Testis (tissue), 5 donors: ENCODE measurements at regions of chr10 and their contacts with region 1.

Region 1: GRCh38 chr10:60208676-60209269 is 180.9 kb downstream of the ANK3 start:
- DNase-seq: no peak
- H3K4me3 ChIP-seq: no peak overlapping the region
- H3K27ac ChIP-seq: no peak overlapping the region
- H3K4me1 ChIP-seq: no peaks in the 10 kb centered on the region
- H3K27me3 ChIP-seq: no peaks in the 10 kb centered on the region
- CTCF ChIP-seq: peak; percentile 36 to 66 (median 62)
- POLR2A ChIP-seq: no peak

Region 2: DNA sequence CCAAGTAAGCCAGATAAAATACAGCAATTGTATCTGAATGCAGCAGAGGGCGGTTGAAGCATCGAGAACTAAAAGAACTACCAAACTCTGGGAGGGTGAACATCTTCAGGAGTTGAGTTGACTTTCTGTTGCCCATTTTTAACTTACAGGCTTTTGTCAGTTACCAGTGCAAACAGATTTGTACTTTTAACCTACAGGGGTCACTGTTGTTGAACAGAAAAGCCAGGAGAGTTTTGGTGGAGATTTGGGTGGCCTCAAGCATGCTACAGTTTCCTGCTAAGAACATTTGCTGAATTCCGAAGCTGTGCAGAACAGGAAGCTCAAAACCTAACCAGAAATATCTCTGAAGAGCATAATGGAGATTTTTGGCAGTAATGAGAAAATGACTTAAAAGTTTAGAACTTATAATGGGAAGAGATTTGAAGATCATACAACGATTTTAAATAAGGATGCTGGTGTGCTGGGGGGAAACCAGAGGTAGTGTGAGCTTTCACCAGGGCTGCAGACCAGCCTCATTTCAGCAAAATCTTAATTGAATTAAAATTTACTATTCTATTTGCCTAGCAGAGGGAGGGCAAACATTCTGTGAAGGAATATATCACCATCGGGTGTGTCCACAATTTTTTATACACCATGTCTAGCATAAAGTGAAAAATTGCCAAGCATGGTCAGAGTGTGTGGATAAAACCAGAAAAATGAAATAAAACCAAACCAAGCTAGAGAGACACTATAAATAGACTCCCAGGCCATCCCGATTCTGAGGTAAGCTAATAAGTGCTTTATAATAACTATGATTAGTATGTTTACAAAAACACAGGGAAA is 93.8 kb before region 1 on chr10:
- intact Hi-C with region 1: loop called (anchors 10 kb)
- DNase-seq: no peak
- H3K4me3 ChIP-seq: no peak overlapping the region
- H3K27ac ChIP-seq: no peak overlapping the region
- H3K4me1 ChIP-seq: no peaks in the 10 kb centered on the region
- H3K27me3 ChIP-seq: no peaks in the 10 kb centered on the region
- CTCF ChIP-seq: peak; percentile 16 to 43 (median 25)
- POLR2A ChIP-seq: no peak

Region 3: DNA sequence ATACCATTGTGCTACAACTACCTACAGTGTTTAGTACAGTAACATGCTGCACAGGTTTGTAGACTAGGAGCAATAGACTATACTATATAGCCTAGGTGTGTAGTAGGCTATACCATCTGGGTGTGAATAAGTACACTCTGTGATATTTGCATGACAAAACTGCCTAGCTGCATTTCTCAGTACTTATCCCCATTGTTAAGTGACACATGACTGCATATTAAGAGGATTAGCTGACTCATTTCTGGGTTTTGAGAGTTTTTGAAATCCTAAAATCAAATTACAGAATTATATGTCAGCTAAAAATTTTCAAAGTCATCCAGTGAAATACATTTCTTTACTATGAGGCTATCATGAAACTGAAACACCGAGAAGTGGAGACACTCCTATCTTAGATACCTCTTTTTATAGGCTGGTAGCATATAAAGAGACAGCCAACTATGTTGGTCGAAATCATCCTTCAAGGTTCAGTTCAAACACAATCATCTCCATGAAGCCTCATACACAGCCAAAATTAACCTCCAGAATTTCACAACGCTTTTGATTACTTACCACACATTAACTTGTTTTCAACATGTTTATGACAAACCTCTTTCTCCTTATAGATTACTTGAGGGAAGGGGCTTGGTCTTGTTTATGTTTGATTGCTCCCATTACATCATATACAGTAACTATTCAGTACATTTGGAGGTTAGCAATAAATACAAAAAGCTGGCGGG is 270.7 kb after region 1 on chr10:
- intact Hi-C with region 1: no loop called
- DNase-seq: no peak
- H3K4me3 ChIP-seq: no peak overlapping the region
- H3K27ac ChIP-seq: no peak overlapping the region
- H3K4me1 ChIP-seq: no peaks in the 10 kb centered on the region
- H3K27me3 ChIP-seq: no peaks in the 10 kb centered on the region
- CTCF ChIP-seq: no peak
- POLR2A ChIP-seq: no peak